ENCODE measurements at regions of chr2 and their contacts with region 1.

Region 1: DNA sequence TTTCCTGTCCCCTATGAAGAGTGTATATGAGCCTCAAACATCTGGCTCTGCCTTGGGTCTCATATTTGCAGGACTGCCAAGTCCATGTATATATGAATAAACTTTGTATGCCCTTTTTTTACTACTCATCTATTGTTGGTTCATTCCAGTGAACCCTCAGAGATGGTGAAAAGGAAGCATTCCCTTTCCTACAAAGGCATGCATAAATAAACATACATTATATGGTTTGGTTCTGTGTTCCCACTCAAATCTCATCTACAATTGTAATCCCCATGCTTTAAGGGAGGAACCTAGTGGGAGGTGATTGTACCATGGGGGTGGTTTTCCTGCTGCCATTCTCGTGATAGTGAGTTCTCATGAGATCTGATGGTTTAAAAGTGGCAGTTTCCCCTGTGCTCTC is 534.2 kb downstream of the SPAG16 start:
- DNase-seq: peak; percentile 76
- ATAC-seq: peak; percentile 89
- H3K4me3 ChIP-seq: no peak overlapping the region
- H3K27ac ChIP-seq: no peak overlapping the region
- H3K4me1 ChIP-seq: peaks cover 3% of the 10 kb centered on the region; the same call in 1 of the 2 replicates
- H3K27me3 ChIP-seq: no peaks in the 10 kb centered on the region
- CTCF ChIP-seq: no peak
- POLR2A ChIP-seq: no peak
- RAD21 ChIP-seq: no peak

Region 2: DNA sequence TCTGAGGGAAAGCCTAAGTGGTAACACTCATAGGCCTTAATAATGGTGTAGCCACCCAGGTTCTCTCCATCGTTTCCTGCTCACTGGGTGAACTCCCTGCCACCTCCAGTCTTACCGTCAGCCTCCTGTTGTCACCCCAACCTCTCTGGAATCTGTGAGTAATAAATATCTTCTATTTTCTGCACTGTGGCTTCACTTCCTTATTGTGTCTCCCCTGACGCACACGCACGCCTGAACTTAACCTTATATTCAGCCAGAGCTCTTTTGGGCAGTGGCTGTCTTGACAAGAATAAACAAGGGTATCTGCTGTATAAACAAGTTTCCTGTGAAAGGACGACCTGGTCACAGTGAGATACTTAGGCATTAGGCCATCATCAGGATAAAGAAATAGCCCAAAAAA is 67.0 kb before region 1 on chr2:
- CTCF ChIA-PET with region 1: no interaction called
- POLR2A ChIA-PET with region 1: no interaction called
- dilution Hi-C with region 1: no loop called
- in situ Hi-C with region 1: no loop called
- intact Hi-C with region 1: no loop called
- DNase-seq: no peak
- ATAC-seq: no peak
- H3K4me3 ChIP-seq: no peak overlapping the region
- H3K27ac ChIP-seq: no peak overlapping the region
- H3K4me1 ChIP-seq: no peaks in the 10 kb centered on the region
- H3K27me3 ChIP-seq: no peaks in the 10 kb centered on the region
- CTCF ChIP-seq: no peak
- POLR2A ChIP-seq: no peak
- RAD21 ChIP-seq: no peak

Region 3: DNA sequence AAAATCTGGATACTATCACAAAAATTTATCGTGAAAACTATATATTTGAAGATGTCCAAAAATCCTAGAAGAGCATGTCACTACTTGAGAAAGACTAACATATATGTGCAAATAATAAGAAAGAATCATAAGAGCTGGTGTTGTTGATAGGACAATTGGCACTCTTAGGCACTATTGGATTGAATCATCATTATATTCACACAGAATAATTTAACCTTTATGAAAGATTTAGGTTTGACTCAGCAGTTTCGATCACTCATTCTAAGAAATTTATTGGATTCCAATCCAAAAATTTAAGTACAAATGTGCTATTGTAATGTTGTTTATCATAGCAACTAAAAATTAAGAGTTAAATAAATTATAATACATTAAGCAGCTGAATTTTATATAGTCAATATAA is 30.6 kb before region 1 on chr2:
- CTCF ChIA-PET with region 1: no interaction called
- POLR2A ChIA-PET with region 1: no interaction called
- dilution Hi-C with region 1: no loop called
- in situ Hi-C with region 1: no loop called
- intact Hi-C with region 1: no loop called
- DNase-seq: no peak
- ATAC-seq: no peak
- H3K4me3 ChIP-seq: no peak overlapping the region
- H3K27ac ChIP-seq: no peak overlapping the region
- H3K4me1 ChIP-seq: no peaks in the 10 kb centered on the region
- H3K27me3 ChIP-seq: no peaks in the 10 kb centered on the region
- CTCF ChIP-seq: no peak
- POLR2A ChIP-seq: no peak
- RAD21 ChIP-seq: no peak

Region 4: DNA sequence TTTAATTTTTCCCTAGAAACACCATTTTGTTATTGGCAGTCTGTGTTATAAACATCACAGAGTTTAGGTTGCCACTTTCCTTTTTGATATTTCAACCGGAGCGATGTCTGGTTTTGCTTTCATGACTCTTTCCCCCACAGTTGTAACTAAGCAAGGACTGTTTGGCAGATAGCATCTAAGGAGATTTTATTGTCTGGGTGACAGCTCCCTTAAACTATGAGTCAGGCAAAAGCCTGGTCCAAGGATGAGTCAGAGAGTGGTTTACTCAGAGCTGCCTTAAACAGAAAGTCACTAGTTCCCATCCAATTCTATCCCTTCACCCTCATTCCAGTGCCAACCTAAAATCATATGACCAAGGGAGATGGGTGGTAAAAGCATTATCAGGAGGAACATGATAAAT is 250.8 kb after region 1 on chr2:
- CTCF ChIA-PET with region 1: no interaction called
- POLR2A ChIA-PET with region 1: no interaction called
- dilution Hi-C with region 1: no loop called
- in situ Hi-C with region 1: no loop called
- intact Hi-C with region 1: loop called (anchors 1 kb)
- DNase-seq: peak; percentile 93
- ATAC-seq: peak; percentile 99
- H3K4me3 ChIP-seq: peak overlapping the region; percentile 35; the same call in 1 of the 2 replicates
- H3K27ac ChIP-seq: no peak overlapping the region
- H3K4me1 ChIP-seq: no peaks in the 10 kb centered on the region
- H3K27me3 ChIP-seq: no peaks in the 10 kb centered on the region
- CTCF ChIP-seq: no peak
- POLR2A ChIP-seq: no peak
- RAD21 ChIP-seq: peak; percentile 5; the same call in 1 of the 2 replicates

Region 5: DNA sequence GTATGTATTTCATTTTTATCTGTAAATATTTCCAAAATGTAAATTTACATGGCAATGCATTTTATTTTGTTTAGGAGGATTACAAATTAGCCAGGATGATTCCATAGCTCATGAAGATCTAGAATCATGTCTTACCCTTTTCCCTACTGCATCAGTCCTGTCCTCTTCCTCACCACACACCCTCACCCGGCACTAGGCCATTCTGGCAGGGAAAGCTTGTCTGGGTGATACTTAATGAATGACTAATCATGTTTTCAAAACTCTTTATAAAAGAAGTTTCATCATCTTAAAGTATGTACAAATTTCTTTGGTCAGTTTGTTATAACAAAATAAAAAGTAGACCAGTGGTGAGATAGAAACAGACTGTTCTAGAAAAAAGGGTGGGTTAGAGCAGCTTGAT is 309.1 kb after region 1 on chr2:
- CTCF ChIA-PET with region 1: no interaction called
- POLR2A ChIA-PET with region 1: no interaction called
- dilution Hi-C with region 1: no loop called
- in situ Hi-C with region 1: no loop called
- intact Hi-C with region 1: no loop called
- DNase-seq: peak; percentile 57
- ATAC-seq: peak; percentile 87
- H3K4me3 ChIP-seq: no peak overlapping the region
- H3K27ac ChIP-seq: no peak overlapping the region
- H3K4me1 ChIP-seq: peaks cover 1% of the 10 kb centered on the region; the same call in 1 of the 2 replicates
- H3K27me3 ChIP-seq: no peaks in the 10 kb centered on the region
- CTCF ChIP-seq: no peak
- POLR2A ChIP-seq: no peak
- RAD21 ChIP-seq: no peak